ENCODE measurements at regions of chr11 and their contacts with region 1.

Region 1: GRCh38 chr11:62705880-62706849 is 1.1 kb downstream of the BSCL2 start:
- DNase-seq: peak; percentile 97
- H3K4me3 Mint-ChIP-seq: peak overlapping the region; percentile 96
- H3K27ac Mint-ChIP-seq: peak overlapping the region; percentile 89
- H3K4me1 Mint-ChIP-seq: peaks cover 33% of the 10 kb centered on the region
- H3K27me3 Mint-ChIP-seq: no peaks in the 10 kb centered on the region

Region 2: DNA sequence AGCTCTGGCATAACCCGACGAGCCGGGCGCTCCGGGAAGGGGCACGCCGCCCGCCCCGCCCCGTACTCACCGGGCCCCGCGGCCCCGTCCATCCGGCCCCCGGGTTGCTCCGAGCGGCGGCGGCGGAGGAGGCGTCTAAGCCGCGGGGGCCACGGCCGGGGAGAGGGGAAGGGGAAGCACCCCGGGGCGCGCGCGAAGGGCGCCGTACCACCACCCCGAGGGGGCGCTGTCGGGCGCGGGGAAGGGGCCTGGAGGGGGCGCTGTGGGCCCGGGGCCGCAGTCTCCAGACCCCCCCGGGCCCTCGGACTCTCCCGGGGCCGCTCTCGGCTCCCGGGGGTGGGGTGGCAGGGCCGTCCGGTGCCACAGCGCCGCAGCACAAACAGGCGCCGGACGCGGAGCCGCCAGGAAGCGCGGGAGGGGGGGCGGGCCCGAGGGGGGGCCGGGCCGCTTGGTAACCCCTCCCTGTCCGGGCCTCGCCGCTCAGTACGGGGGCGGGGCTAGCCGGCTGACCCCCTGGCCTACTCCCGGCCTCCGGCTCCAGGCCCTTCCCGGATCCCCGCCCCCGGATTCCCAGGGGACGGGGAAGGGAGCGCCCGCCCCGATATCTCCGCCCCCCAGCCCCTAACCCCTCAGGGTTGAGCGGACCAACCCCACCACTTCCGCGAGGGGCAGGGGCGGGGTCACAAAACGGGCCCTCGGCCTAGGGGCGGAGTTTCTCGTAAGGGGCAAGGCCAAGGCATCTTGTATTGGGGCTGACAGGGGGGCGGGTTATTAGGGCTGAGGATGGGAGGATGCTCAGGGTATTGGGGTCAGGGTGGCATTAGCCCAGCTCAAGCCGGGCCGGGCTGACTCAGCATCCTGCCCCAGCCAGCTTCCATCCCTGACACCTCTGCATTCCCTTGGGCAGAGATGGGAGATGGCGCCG is 93.5 kb before region 1 on chr11 and contains the starts of genes EML3 and ROM1:
- intact Hi-C with region 1: loop called (anchors 5 kb)
- DNase-seq: peak; percentile 97
- H3K4me3 Mint-ChIP-seq: peak within 1 kb of the TSS; percentile 98
- H3K27ac Mint-ChIP-seq: peak within 1 kb of the TSS; percentile 97
- H3K4me1 Mint-ChIP-seq: peaks cover 46% of the 10 kb centered on the region
- H3K27me3 Mint-ChIP-seq: no peaks in the 10 kb centered on the region
- total RNA-seq, gene EML3: 161 and 166 TPM in 2 replicates
- total RNA-seq, gene ROM1: 2.3 and 3.1 TPM in 2 replicates

Region 3: GRCh38 chr11:62627714-62628113 is 78.5 kb before region 1 on chr11:
- intact Hi-C with region 1: no loop called
- DNase-seq: no peak
- H3K4me3 Mint-ChIP-seq: no peak overlapping the region
- H3K27ac Mint-ChIP-seq: no peak overlapping the region
- H3K4me1 Mint-ChIP-seq: peaks cover 7% of the 10 kb centered on the region
- H3K27me3 Mint-ChIP-seq: no peaks in the 10 kb centered on the region

Region 4: GRCh38 chr11:62671575-62672389 is 34.4 kb before region 1 on chr11 and contains the starts of genes LBHD1 and UQCC3:
- intact Hi-C with region 1: loop called (anchors 2 kb)
- DNase-seq: peak; percentile 94
- H3K4me3 Mint-ChIP-seq: peak within 1 kb of the TSS; percentile 88
- H3K27ac Mint-ChIP-seq: peak within 1 kb of the TSS; percentile 92
- H3K4me1 Mint-ChIP-seq: peaks cover 38% of the 10 kb centered on the region
- H3K27me3 Mint-ChIP-seq: no peaks in the 10 kb centered on the region
- total RNA-seq, gene LBHD1: 21.5 and 23.0 TPM in 2 replicates
- total RNA-seq, gene UQCC3: 8.6 and 9.4 TPM in 2 replicates

Region 5: DNA sequence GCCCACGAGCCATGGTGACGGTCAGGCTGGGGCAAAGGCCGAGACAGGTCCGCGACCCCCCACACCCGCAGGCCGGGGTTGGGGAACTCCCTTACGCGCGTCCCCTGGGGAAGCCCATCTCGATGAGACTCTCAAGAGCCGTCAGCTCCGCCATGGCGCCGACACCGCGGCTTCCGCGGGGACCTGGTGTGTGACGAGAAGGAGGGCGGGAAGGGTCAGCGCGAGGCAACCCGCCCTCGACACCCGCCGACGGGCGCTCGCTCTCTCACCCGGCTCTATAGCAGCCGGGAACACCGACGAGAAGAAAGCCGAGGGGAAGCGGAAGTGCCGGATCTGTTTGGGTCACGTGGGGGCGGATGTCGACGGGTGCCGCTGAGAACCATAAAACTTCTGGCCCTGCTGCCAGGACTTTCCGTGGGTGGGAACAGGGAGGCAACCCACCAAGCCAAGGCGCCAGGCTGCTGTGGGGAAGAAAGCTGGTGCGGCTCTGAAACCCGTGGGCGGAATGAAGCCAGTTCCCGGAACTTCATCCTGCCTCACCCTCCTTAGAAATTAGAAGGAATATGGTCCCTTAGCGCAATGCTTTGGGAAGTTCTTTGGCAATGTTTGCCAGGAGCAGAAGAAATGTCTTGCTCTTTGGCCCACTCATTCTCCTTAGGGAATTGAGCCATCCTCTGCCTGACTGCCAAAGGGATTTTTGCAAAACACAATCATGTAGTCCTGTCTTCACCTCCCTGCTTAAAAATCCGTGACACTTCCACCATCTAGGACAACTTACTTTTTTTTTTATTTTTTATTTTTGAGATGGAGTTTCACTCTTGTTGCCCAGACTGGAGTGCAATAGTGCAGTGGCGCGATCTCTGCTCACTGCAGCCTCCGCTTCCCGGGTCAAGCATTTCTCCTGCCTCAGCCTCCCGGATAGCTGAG is 27.1 kb before region 1 on chr11 and contains the start of gene UBXN1:
- intact Hi-C with region 1: loop called (anchors 1 kb)
- DNase-seq: peak; percentile 95
- H3K4me3 Mint-ChIP-seq: peak within 1 kb of the TSS; percentile 85
- H3K27ac Mint-ChIP-seq: peak within 1 kb of the TSS; percentile 96
- H3K4me1 Mint-ChIP-seq: peaks cover 27% of the 10 kb centered on the region
- H3K27me3 Mint-ChIP-seq: no peaks in the 10 kb centered on the region
- total RNA-seq, gene UBXN1: 118 and 121 TPM in 2 replicates

Region 6: DNA sequence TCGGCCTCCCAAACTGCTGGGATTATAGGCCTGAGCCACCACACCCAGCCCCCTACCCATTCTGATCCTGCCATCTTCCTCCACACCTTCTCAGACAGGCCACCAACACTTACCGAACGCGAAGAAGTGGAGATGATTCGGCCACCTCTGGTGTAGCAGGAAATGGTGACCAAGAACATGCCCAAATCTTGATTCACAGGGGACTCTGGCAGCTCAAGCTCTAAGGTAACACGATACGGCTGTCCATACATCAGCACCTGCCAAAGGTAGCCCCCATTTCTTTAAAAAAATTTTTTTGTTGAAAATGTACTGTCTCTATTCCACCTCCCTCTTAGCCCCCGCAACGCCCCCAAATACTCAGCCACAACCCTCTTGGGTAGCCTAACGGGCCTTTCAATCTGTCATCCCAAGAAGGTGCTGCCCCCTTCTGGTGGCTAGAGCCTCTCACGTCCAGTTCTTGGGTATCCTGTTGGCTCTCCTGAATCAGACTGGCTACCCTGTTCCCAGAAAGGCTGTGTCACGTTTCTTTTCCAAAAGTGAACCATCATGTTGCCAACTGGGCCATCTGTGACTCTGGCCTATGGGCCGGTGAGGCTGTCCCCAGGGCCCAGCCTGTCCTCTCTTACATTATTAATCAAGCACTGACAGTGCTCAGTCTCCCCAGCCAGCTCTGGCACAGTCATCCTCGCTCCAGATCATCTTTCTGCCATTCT is 11.6 kb before region 1 on chr11:
- intact Hi-C with region 1: no loop called
- DNase-seq: peak; percentile 93
- H3K4me3 Mint-ChIP-seq: no peak overlapping the region
- H3K27ac Mint-ChIP-seq: peak overlapping the region; percentile 68
- H3K4me1 Mint-ChIP-seq: peaks cover 7% of the 10 kb centered on the region
- H3K27me3 Mint-ChIP-seq: no peaks in the 10 kb centered on the region